ENCODE measurements at regions of chr5 and their contacts with region 1.

Region 1: DNA sequence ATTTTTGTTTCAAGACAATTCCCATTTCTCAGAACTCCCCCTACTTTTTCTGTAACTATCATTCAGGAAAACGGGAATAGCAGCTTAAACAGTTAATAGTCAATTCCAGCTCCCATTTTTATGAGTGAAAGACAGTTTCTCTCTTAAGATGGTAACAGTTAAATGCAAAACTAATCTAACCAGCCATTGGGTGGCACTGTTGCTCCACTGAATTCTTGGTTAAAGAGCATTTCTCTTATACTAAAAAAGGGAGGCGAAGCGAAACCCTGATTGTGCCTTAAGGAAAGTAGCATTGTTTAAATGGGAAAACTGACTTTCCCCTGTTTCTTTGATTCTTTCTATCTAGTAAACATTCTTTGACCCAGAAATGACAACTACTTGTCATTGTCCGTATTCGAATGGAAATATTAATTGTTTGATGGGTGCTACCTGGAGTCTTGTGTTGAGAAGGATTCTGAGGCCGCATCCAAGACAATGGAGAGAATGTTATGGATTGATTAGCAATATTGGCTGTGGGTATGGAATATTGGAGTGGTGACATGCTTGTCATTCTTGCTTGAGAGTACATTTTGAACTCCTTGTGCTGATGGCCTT is 507.8 kb downstream of the MAT2B start:
- DNase-seq: no peak
- H3K4me3 ChIP-seq: no peak overlapping the region
- H3K27ac ChIP-seq: no peak overlapping the region
- H3K4me1 ChIP-seq: no peaks in the 10 kb centered on the region
- H3K27me3 ChIP-seq: no peaks in the 10 kb centered on the region
- CTCF ChIP-seq: peak; percentile 28 to 50 (median 35)

Region 2: GRCh38 chr5:164504141-164504772 is 491.1 kb after region 1 on chr5:
- intact Hi-C with region 1: loop called (anchors 10 kb)
- DNase-seq: no peak
- H3K4me3 ChIP-seq: no peak overlapping the region
- H3K27ac ChIP-seq: no peak overlapping the region
- H3K4me1 ChIP-seq: no peaks in the 10 kb centered on the region
- H3K27me3 ChIP-seq: no peaks in the 10 kb centered on the region
- CTCF ChIP-seq: peak; percentile 24 to 57 (median 39)